ENCODE measurements at regions of chr2 and their contacts with region 1.

Region 1: GRCh38 chr2:102753563-102754159 is 8.2 kb upstream of the TMEM182 start:
- DNase-seq: peak; percentile 42
- ATAC-seq: peak; percentile 51
- H3K4me3 Mint-ChIP-seq: no peak overlapping the region
- H3K27ac Mint-ChIP-seq: no peak overlapping the region
- H3K4me1 Mint-ChIP-seq: no peaks in the 10 kb centered on the region
- H3K27me3 Mint-ChIP-seq: no peaks in the 10 kb centered on the region
- CTCF ChIP-seq: peak; percentile 92

Region 2: GRCh38 chr2:102585847-102586431 is 167.7 kb before region 1 on chr2:
- CTCF ChIA-PET with region 1: no interaction called
- POLR2A ChIA-PET with region 1: no interaction called
- intact Hi-C with region 1: no loop called
- DNase-seq: no peak
- ATAC-seq: no peak
- H3K4me3 Mint-ChIP-seq: no peak overlapping the region
- H3K27ac Mint-ChIP-seq: no peak overlapping the region
- H3K4me1 Mint-ChIP-seq: peaks cover 6% of the 10 kb centered on the region
- H3K27me3 Mint-ChIP-seq: peaks cover 10% of the 10 kb centered on the region
- CTCF ChIP-seq: no peak

Region 3: DNA sequence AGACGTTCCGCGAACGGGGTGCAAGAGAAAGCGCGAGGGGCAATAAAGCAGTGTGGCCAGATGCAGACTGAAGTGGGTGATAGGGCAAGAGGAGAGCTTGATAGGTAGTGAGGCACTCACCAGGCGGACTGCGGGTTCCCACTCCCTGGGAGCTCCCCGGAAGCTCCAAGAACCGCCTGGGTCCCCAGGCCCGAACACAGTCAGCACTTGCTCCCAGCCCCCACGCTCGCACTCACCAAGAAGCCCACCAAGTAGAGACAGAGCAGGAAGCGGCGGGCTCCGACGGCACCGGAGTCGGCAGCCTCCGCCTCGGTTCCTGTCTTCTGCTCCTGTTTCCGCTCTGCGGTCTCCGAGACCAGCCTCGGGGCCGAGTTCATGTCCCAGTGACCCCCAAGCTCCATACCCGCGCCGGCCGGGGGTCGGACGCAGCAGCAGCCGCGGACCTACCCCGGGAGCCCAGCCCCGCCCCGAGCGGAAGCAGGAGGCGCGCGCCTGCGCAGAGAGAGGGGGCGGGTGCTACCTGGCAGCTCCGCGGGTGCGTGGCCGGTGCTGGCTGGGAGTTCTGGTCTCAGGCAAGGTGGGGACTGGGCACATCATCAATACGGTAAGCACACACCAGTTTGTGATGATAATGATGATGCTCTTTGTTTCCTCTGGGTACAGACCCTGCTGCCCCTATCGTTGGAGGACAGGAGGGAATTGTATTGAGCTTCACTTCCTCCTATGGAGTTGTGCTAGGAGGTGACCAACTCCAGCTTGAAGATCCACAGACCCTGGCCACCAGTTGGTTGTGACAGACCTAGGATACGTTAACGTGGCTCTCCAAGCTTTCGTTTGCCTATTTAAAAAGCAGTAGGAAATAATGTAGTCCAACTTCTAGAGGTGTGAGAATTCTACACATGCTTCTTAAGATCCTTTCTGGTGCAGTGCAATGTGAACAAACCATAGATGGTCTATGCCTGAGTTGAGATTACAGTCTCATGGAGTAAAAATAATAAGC is 17.0 kb before region 1 on chr2:
- CTCF ChIA-PET with region 1: interaction called, 69 read pairs
- POLR2A ChIA-PET with region 1: interaction called, 3 read pairs
- intact Hi-C with region 1: no loop called
- DNase-seq: peak; percentile 89
- ATAC-seq: peak; percentile 95
- H3K4me3 Mint-ChIP-seq: peak overlapping the region; percentile 95
- H3K27ac Mint-ChIP-seq: peak overlapping the region; percentile 92
- H3K4me1 Mint-ChIP-seq: peaks cover 39% of the 10 kb centered on the region
- H3K27me3 Mint-ChIP-seq: no peaks in the 10 kb centered on the region
- CTCF ChIP-seq: no peak

Region 4: DNA sequence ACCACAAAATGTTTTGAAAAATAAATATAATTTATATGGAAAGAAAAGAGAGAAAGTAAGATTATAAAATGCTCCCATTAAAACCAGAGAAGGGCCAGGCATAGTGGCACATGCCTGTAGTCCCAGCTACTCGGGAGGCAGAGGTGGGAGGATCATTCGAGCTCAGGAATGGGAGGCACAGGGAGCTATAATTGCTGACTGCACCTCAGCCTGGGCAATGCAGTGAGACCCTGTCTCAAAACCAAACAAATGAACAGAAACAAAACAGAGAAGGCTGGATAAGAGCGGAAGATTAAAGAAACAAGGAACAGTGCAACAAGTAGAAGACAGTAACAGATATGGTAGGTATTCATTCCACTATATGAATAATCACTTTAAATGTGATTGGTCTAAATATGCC is 10.4 kb before region 1 on chr2:
- CTCF ChIA-PET with region 1: interaction called, 13 read pairs
- POLR2A ChIA-PET with region 1: no interaction called
- intact Hi-C with region 1: no loop called
- DNase-seq: no peak
- ATAC-seq: no peak
- H3K4me3 Mint-ChIP-seq: no peak overlapping the region
- H3K27ac Mint-ChIP-seq: no peak overlapping the region
- H3K4me1 Mint-ChIP-seq: no peaks in the 10 kb centered on the region
- H3K27me3 Mint-ChIP-seq: no peaks in the 10 kb centered on the region
- CTCF ChIP-seq: no peak